Transverse colon (tissue), 4 donors: ENCODE measurements at regions of chr3 and their contacts with region 1.

Region 1: GRCh38 chr3:154615471-154615870 is 185.5 kb upstream of the GPR149 start:
- DNase-seq: no peak
- H3K4me3 ChIP-seq: no peak overlapping the region
- H3K27ac ChIP-seq: no peak overlapping the region
- H3K4me1 ChIP-seq: no peaks in the 10 kb centered on the region
- H3K27me3 ChIP-seq: no peaks in the 10 kb centered on the region
- CTCF ChIP-seq: no peak
- EP300 ChIP-seq: no peak
- POLR2A ChIP-seq: no peak

Region 2: DNA sequence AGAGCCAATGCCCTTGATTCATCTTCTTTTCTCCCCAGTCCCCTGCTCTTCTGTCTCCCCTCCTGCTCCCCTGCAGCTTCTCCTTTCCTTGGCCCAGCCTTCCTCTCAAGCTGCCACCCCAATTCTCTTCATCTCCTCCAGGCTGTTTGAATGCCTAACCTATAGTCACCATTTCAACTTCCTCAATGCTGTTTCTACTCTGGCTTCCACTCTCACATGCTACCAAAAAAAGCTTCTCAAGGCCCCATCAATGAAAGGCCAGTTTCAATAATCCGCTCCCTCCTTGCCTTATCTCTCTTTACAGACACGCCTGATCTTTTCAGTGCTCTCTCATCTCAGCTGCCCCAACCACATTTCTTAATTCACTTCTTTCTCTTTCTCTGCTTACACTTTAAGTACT is 26.7 kb after region 1 on chr3:
- in situ Hi-C with region 1: no loop called
- intact Hi-C with region 1: loop called (anchors 1 kb)
- DNase-seq: no peak
- H3K4me3 ChIP-seq: no peak overlapping the region
- H3K27ac ChIP-seq: no peak overlapping the region
- H3K4me1 ChIP-seq: no peaks in the 10 kb centered on the region
- H3K27me3 ChIP-seq: no peaks in the 10 kb centered on the region
- CTCF ChIP-seq: no peak
- EP300 ChIP-seq: no peak
- POLR2A ChIP-seq: no peak